ENCODE measurements at regions of chr6 and their contacts with region 1.

Region 1: DNA sequence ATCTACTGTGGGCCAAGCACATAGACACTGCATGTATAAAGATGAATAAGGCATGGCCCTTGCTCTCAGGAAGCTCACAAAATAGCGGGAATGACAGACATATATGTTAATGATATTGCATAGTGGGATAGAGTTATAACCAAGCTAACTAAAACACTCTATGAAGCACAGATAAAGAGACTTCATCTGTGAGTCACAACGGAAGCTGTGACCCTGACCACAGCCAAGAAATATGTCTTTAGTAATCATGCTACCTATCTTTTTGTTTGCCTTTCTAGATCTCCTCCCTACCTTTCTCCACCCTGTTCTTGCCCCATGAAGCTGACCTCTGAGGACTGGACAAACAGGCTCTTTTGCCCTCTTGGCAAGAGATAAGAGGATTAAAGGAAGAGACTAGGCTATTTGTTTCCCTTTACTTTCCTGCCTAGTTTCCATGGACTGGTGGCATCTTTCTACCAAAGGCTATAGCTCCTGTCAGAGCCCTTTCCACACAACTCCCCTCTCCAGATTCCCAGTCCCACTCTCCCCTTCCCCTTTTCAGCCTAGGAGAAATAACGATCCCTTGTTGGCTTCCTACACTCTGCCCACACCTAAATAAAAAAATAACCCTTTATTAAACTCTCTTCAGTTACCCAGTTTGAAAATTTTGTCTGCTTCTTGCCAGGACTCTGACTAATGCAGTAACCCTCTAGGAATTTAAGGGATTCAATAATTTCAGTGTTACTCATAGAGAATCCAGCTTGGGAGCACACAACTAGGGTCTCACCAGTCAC is 504.9 kb upstream of the MARCKS start:
- DNase-seq: no peak
- H3K4me3 Mint-ChIP-seq: no peak overlapping the region
- H3K27ac Mint-ChIP-seq: no peak overlapping the region
- H3K4me1 Mint-ChIP-seq: no peaks in the 10 kb centered on the region
- H3K27me3 Mint-ChIP-seq: peaks cover 2% of the 10 kb centered on the region

Region 2: GRCh38 chr6:113362301-113363047 is 10.3 kb after region 1 on chr6:
- CTCF ChIA-PET with region 1: no interaction called
- intact Hi-C with region 1: no loop called
- DNase-seq: no peak
- H3K4me3 Mint-ChIP-seq: no peak overlapping the region
- H3K27ac Mint-ChIP-seq: no peak overlapping the region
- H3K4me1 Mint-ChIP-seq: no peaks in the 10 kb centered on the region
- H3K27me3 Mint-ChIP-seq: no peaks in the 10 kb centered on the region

Region 3: DNA sequence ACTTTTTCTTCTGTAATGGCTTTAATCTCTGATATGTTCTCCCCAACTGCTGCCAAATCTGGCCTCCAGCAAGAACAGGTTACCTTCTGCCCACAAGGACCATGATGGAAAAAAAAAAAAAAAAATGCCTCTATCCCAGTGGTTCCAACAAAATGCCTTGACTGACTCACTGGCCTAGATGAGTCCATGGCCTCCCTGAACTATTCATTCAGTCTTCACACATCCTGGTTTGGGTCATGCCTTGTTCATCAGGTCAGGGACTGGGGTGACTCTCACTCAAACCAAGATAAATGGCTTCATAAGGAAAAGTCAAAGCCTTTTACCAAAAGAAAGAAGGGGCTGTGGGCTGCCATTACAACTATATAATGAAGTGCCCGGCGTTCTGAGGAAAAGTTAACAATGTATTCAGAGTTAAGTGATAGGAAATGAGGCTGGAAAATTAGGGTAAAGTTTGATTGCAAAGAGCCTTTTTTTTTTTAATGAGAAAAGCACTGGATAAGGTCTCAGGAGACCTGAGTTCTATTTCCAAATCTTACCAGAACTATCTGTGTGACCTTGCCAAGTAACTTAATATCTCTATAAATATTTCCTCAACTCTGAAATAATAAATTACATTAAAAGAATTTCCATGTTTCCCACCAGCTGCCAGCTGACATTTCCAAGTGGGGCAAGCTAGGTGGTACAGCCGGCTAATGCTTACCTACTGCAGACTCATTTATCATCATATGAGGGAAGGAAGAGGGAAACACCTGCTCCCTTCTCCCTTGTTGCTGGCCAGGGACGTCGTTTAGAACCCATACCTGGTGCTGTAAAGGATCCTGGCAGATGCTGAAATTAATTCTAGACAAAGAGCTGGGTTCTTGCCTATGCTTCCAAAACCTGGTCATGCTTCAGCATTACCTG is 125.0 kb after region 1 on chr6:
- CTCF ChIA-PET with region 1: no interaction called
- intact Hi-C with region 1: loop called (anchors 10 kb)
- DNase-seq: no peak
- H3K4me3 Mint-ChIP-seq: no peak overlapping the region
- H3K27ac Mint-ChIP-seq: no peak overlapping the region
- H3K4me1 Mint-ChIP-seq: no peaks in the 10 kb centered on the region
- H3K27me3 Mint-ChIP-seq: no peaks in the 10 kb centered on the region